Psoas muscle (tissue), 8 donors: ENCODE measurements at regions of chr2 and their contacts with region 1.

Region 1: DNA sequence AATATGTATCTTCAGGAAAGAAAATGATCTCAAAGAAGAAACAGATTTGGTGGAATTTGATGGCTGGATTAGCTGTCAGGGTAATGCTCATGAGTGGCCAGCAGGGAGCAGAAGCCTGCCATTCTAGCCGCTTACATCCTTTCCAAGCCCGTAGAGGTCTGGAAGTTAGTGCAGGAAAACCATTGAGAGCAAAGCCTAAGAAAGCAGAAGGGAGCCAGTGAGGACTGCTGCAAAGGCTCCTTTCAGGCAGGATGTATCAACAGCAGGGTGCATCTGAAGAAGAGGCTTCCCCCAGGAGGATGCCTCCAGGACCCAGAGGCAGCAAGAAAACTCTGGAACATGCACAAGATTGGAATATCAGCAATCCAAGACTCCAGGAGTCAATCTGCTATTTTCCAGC is 22.9 kb upstream of the LBH start:
- DNase-seq: peak; percentile 51 to 63
- ATAC-seq: peak; percentile 81 to 96 (median 88)
- H3K4me3 ChIP-seq: no peak overlapping the region
- H3K27ac ChIP-seq: no peak overlapping the region
- H3K4me1 ChIP-seq: no peaks in the 10 kb centered on the region
- H3K27me3 ChIP-seq: peaks cover 0 to 2% (median 0%) of the 10 kb centered on the region in 3 donors
- CTCF ChIP-seq: peak; percentile 92

Region 2: DNA sequence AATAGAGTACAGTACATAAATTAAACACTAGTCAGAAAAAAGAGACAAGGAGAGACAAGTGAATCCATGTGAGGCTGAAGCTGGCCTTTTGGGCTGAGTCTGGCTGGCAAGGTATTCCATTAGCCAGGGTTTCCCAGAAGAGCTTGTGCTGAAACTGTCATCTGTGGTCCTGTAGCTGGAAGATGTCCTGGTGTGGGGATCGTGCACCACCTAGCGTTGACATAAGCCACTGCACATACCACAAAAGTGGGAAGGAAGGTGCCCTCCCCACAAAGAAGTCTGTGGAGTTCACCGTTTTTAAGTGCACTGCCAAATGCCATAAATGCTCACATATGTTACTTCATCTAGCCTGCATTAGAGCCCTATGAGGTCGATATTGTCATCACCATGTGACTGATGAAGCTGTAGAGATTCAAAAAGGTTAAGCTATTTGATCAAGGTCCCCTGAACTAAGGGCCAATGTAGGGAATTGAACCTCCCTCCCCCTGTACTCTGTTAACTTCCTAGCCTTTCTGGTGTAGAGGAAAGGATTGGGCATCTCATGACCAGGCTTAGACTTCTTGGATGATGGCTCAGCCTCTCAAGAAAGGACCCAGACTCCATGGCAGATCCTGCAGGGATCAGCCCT is 961.7 kb after region 1 on chr2:
- intact Hi-C with region 1: loop called in 1 of 2 experiments (anchors 10 kb)
- DNase-seq: peak; percentile 37 to 67
- ATAC-seq: peak; percentile 77 to 91 (median 88)
- H3K4me3 ChIP-seq: no peak overlapping the region
- H3K27ac ChIP-seq: no peak overlapping the region
- H3K4me1 ChIP-seq: no peaks in the 10 kb centered on the region
- H3K27me3 ChIP-seq: no peaks in the 10 kb centered on the region
- CTCF ChIP-seq: peak; percentile 91